K562 (cell line): ENCODE measurements at regions of chrX and their contacts with region 1.

Region 1: DNA sequence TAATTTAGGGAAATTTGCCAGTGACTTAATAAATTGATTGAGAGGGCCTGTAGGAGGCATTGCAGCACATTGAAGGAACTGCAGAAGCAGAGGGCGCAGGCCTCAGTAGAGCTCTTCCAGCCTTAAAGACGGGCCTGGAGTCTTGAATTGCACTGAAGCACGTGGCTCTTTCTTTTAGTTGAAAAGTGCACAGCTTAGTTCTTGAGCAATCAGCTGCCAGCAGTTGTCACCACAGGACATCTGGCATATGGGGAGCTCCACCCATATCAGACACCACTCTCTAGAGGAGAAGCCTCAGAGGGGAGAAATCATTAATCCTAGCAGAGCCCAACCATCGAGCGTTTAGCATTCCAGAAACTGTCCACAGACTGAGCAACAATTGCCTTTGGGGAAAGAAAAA is 16.0 kb upstream of the FGF16 start:
- DNase-seq: peak in 1 of 4 experiments; percentile 10
- ATAC-seq: peak; percentile 34; the same call in 1 of the 3 replicates
- H3K4me3 ChIP-seq: no peak overlapping the region
- H3K27ac ChIP-seq: no peak overlapping the region
- H3K4me1 ChIP-seq: no peaks in the 10 kb centered on the region
- H3K27me3 ChIP-seq: 0 out of 5 replicates have a peak, but pooled peaks cover 0 to under 1% of the 10 kb centered on the region in 2 experiments
- CTCF ChIP-seq: peak in 1 of 3 experiments; percentile 12; a peak in 1 of 6 replicates
- EP300 ChIP-seq: no peak
- POLR2A ChIP-seq: no peak
- RAD21 ChIP-seq: no peak

Region 2: GRCh38 chrX:77597090-77597489 is 165.9 kb after region 1 on chrX:
- CTCF ChIA-PET with region 1: no interaction called
- POLR2A ChIA-PET with region 1: no interaction called
- in situ Hi-C with region 1: no loop called
- intact Hi-C with region 1: loop called (anchors 10 kb)
- DNase-seq: peak in 2 of 4 experiments; percentile 8 to 10
- ATAC-seq: no peak
- H3K4me3 ChIP-seq: no peak overlapping the region
- H3K27ac ChIP-seq: no peak overlapping the region
- H3K4me1 ChIP-seq: no peaks in the 10 kb centered on the region
- H3K27me3 ChIP-seq: no peaks in the 10 kb centered on the region
- CTCF ChIP-seq: peak in 1 of 3 experiments; percentile 34; a peak in 2 of 6 replicates
- EP300 ChIP-seq: no peak
- POLR2A ChIP-seq: no peak
- RAD21 ChIP-seq: peak in 1 of 2 experiments; percentile 30; a peak in 1 of 4 replicates

Region 3: GRCh38 chrX:77622233-77622632 is 191.0 kb after region 1 on chrX:
- CTCF ChIA-PET with region 1: no interaction called
- POLR2A ChIA-PET with region 1: no interaction called
- in situ Hi-C with region 1: no loop called
- intact Hi-C with region 1: no loop called
- DNase-seq: no peak
- ATAC-seq: no peak
- H3K4me3 ChIP-seq: no peak overlapping the region
- H3K27ac ChIP-seq: no peak overlapping the region
- H3K4me1 ChIP-seq: no peaks in the 10 kb centered on the region
- H3K27me3 ChIP-seq: no peaks in the 10 kb centered on the region
- CTCF ChIP-seq: no peak
- EP300 ChIP-seq: no peak
- POLR2A ChIP-seq: no peak
- RAD21 ChIP-seq: no peak

Region 4: DNA sequence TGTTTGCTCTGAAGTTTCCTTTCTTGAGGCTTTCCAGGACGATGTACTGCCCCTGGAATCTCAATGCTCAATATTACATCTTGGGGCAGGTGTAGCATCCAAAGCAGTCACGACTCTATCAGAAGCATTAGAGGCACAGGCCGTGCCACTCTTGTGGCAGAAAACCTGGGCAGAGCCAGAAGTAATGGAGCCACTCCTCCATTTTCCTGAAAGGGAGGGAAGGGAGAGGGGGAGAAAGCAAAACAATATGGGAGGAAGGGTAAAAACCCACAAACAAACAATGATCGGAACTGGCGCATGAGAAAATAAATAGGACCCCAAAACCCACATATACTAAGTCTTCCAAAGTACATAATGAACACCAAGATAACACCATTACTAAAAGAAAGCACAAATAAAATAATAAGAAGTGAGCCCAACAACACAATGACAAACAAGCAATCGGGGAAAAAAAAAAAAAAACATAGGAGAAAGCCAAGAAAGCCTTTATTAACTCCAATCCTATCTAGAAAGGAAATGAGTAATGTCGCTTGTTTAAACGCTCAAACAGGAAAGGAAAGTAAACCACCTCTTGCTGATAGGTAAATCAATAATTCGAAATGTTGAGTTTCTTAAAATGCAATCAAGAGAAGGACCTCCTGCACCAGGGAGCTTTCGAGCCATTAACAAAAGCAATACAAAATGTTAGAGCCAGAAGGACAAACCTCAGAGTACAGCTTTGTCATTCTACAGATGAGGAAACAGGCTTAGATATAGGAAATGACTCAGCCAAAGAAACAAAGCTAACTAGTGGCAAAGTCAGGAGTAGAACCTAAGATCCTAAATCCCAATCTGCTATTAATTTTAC is 237.4 kb after region 1 on chrX:
- CTCF ChIA-PET with region 1: no interaction called
- POLR2A ChIA-PET with region 1: no interaction called
- in situ Hi-C with region 1: no loop called
- intact Hi-C with region 1: no loop called
- DNase-seq: peak in 2 of 4 experiments; percentile 4 to 12
- ATAC-seq: peak; percentile 88
- H3K4me3 ChIP-seq: no peak overlapping the region
- H3K27ac ChIP-seq: peak overlapping the region; percentile 13; the same call in 2 of the 3 replicates
- H3K4me1 ChIP-seq: no peaks in the 10 kb centered on the region
- H3K27me3 ChIP-seq: no peaks in the 10 kb centered on the region
- CTCF ChIP-seq: no peak
- EP300 ChIP-seq: no peak
- POLR2A ChIP-seq: no peak
- RAD21 ChIP-seq: no peak